ENCODE measurements at regions of chr21 and their contacts with region 1.

Region 1: GRCh38 chr21:34881894-34882371 is 167.2 kb downstream of the RUNX1 start:
- DNase-seq: no peak
- ATAC-seq: no peak
- H3K4me3 Mint-ChIP-seq: peak overlapping the region; percentile 33
- H3K27ac Mint-ChIP-seq: peak overlapping the region; percentile 65
- H3K4me1 Mint-ChIP-seq: peaks cover 48% of the 10 kb centered on the region
- H3K27me3 Mint-ChIP-seq: no peaks in the 10 kb centered on the region
- CTCF ChIP-seq: no peak

Region 2: GRCh38 chr21:34857874-34858273 is 24.1 kb before region 1 on chr21:
- CTCF ChIA-PET with region 1: no interaction called
- POLR2A ChIA-PET with region 1: interaction called, 218 read pairs
- intact Hi-C with region 1: loop called (anchors 1 kb)
- DNase-seq: no peak
- ATAC-seq: no peak
- H3K4me3 Mint-ChIP-seq: no peak overlapping the region
- H3K27ac Mint-ChIP-seq: peak overlapping the region; percentile 36
- H3K4me1 Mint-ChIP-seq: peaks cover 43% of the 10 kb centered on the region
- H3K27me3 Mint-ChIP-seq: no peaks in the 10 kb centered on the region
- CTCF ChIP-seq: no peak

Region 3: GRCh38 chr21:34900376-34900775 is 18.4 kb after region 1 on chr21:
- CTCF ChIA-PET with region 1: no interaction called
- POLR2A ChIA-PET with region 1: no interaction called
- intact Hi-C with region 1: no loop called
- DNase-seq: no peak
- ATAC-seq: no peak
- H3K4me3 Mint-ChIP-seq: no peak overlapping the region
- H3K27ac Mint-ChIP-seq: no peak overlapping the region
- H3K4me1 Mint-ChIP-seq: peaks cover 1% of the 10 kb centered on the region
- H3K27me3 Mint-ChIP-seq: no peaks in the 10 kb centered on the region
- CTCF ChIP-seq: no peak

Region 4: DNA sequence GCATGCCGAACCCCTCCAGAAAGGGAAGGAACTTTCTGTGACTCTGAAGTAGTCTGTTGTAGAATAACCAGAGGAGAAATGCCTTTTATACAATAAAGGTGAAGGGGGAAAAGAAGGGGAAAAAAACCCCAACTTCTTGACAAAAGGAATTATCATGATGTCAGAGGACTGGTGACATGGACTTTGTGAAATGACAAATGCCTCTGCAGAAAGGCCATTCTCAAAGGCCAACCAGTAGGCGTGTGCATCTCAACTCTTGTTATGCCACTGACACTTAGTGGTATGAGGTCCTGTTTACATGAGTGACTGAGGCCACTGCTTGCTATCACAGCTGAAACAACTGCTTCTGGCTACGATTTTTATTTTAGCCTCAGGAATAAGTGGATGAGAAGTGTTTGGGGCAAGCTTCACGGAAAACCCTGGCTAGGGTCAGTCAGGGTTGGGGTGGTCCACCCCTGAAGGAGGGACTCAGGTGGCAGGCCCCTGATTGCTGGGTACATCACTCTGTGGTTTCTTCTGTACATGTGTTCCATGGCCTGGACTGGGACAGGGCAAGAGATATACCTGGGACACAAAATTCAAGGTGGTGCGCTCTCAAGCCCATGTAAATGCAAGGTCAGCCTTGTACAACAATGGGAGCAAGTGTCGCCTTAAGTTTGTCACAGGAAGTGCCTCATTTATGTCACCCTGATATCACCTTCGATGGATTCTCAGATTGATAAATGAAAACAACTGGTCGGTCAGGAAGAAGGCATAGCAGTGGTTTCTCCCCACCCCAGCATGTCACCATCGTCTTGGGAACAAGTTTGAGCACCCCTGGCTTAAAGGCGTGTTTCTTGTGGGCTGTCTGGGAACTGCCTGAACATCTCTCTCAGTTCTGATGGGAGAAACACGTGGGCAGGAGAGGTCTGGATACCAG is 154.8 kb after region 1 on chr21:
- CTCF ChIA-PET with region 1: no interaction called
- POLR2A ChIA-PET with region 1: no interaction called
- intact Hi-C with region 1: no loop called
- DNase-seq: no peak
- ATAC-seq: no peak
- H3K4me3 Mint-ChIP-seq: no peak overlapping the region
- H3K27ac Mint-ChIP-seq: no peak overlapping the region
- H3K4me1 Mint-ChIP-seq: peaks cover 60% of the 10 kb centered on the region
- H3K27me3 Mint-ChIP-seq: no peaks in the 10 kb centered on the region
- CTCF ChIP-seq: no peak

Measured in activated B cell treated with CpG ODN at 0.5 μM for 24 hours (primary cell).